Naive thymus-derived CD4-positive, alpha-beta T cell (primary cell): ENCODE measurements at regions of chr16 and their contacts with region 1.

Region 1: DNA sequence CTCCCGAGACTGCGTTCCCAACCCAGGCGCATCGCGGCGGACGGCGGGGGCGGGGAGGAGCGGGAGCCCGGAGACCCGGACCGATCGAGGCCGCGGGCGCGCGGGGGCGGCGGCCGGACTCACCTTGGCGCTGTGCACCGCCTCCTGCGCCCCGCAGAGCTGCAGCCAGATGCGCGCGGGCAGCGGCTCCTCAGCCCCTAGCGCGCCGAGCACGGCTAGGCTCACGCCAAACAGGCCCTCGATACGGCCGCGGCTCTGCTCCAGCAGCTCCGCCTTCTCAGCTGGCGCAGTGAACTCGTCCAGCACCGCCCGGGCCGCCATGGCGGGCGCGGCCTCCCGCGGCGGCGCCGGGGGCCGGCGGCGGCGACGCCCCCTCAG is 339 bp downstream of the N4BP1 start:
- DNase-seq: no peak
- ATAC-seq: peak; percentile 39
- H3K4me3 ChIP-seq: peak overlapping the region; percentile 66
- H3K4me3 Mint-ChIP-seq: peak overlapping the region in 4 of 10 donors; percentile 24 to 95 (median 56)
- H3K27ac ChIP-seq: peak overlapping the region; percentile 94
- H3K27ac Mint-ChIP-seq: peak overlapping the region in 8 of 9 donors; percentile 88 to 99 (median 94)
- H3K4me1 ChIP-seq: peaks cover 63 to 76% of the 10 kb centered on the region in 2 donors
- H3K4me1 Mint-ChIP-seq: peaks cover 24 to 50% (median 43%) of the 10 kb centered on the region in 7 donors
- H3K27me3 ChIP-seq: no peaks in the 10 kb centered on the region
- H3K27me3 Mint-ChIP-seq: no peaks in the 10 kb centered on the region

Region 2: DNA sequence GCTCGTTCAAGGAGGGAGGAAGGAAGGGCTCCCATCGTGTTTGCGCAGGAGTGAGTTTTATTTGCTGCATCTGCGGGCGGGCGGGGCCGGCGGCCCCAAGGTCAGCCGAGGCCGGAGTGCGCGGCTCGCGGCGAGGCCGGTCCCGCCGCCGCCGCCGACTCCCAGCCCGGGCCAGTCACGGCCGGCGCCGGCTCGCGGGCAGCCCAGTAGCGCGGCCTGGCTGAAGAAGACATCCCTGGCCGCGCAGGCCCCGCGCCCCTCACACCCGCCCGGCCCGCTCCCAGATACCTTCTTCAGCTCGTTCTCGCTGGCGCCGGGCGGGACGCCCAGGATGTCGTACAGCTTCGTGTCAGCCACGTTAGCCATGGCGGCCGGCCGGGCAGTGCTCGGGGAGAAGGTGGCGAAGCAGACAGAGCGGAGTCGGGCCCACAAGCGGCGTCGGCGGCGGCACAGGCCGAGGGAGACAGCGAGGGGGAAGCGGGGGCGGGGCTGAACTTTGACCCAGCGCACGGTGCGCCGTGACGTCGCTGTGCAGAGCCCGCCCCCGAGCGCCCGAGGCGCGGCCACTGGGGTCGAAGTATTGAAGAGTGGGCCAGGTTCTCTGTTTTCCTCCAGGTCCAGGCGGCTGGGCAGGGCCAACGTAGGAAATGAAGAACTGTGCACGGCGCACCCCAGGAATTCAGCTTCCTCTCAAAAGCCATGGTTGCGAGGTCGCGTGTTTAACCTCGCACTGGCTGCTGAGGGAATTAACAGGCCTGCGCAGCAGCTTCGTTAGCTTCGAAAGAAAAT is 1636.2 kb before region 1 on chr16 and contains the start of gene DNAJA2:
- CTCF ChIA-PET with region 1: no interaction called
- POLR2A ChIA-PET with region 1: interaction called, 6 read pairs
- intact Hi-C with region 1: loop called (anchors 2 kb)
- DNase-seq: peak; percentile 86 to 95 (median 92)
- ATAC-seq: peak; percentile 98
- H3K4me3 ChIP-seq: peak within 1 kb of the TSS; percentile 81
- H3K4me3 Mint-ChIP-seq: peak within 1 kb of the TSS; percentile 88 to 98 (median 95)
- H3K27ac ChIP-seq: peak within 1 kb of the TSS; percentile 93
- H3K27ac Mint-ChIP-seq: peak within 1 kb of the TSS; percentile 87 to 100 (median 99)
- H3K4me1 ChIP-seq: peaks cover 26 to 33% of the 10 kb centered on the region in 2 donors
- H3K4me1 Mint-ChIP-seq: peaks cover 27 to 70% (median 51%) of the 10 kb centered on the region in 7 donors
- H3K27me3 ChIP-seq: no peaks in the 10 kb centered on the region
- H3K27me3 Mint-ChIP-seq: no peaks in the 10 kb centered on the region
- total RNA-seq, gene DNAJA2: 59.4 to 73.3 (median 60.9) TPM

Region 3: GRCh38 chr16:48318630-48319029 is 291.0 kb before region 1 on chr16:
- CTCF ChIA-PET with region 1: interaction called, 4 read pairs
- POLR2A ChIA-PET with region 1: interaction called, 15 read pairs
- intact Hi-C with region 1: loop called in 1 of 2 experiments (anchors 2 kb)
- DNase-seq: peak in 8 of 9 donors; percentile 25 to 83 (median 76)
- ATAC-seq: peak; percentile 92
- H3K4me3 ChIP-seq: peak overlapping the region; percentile 25
- H3K4me3 Mint-ChIP-seq: peak overlapping the region; percentile 62 to 88 (median 80)
- H3K27ac ChIP-seq: peak overlapping the region; percentile 9
- H3K27ac Mint-ChIP-seq: peak overlapping the region; percentile 58 to 88 (median 82)
- H3K4me1 ChIP-seq: peaks cover 20 to 35% of the 10 kb centered on the region in 2 donors
- H3K4me1 Mint-ChIP-seq: peaks cover 17 to 77% (median 62%) of the 10 kb centered on the region in 7 donors
- H3K27me3 ChIP-seq: no peaks in the 10 kb centered on the region
- H3K27me3 Mint-ChIP-seq: no peaks in the 10 kb centered on the region

Region 4: DNA sequence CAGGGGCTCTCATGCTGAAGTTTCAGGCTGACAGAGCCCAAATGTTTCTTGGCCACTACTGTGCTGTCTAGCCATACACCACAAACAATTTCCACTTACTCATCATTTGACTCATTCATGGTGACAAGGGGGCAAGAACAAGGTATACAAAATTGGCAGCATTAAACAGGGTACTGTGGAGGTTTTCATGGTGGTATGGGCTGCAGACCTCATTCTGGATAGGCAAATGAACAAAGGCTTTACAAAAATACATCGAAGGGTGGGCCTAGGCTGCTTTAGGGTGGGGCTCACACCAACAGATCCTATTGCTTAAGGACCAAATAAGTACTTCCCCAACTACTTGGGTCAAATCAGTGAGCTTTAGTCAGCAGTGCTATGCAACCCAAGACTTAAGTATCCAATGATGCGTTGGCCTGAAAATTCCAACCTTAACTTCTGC is 52.7 kb before region 1 on chr16:
- CTCF ChIA-PET with region 1: interaction called, 3 read pairs
- POLR2A ChIA-PET with region 1: interaction called, 4 read pairs
- intact Hi-C with region 1: loop called (anchors 1 to 2 kb)
- DNase-seq: no peak
- ATAC-seq: peak; percentile 63
- H3K4me3 ChIP-seq: no peak overlapping the region
- H3K4me3 Mint-ChIP-seq: peak overlapping the region in 6 of 10 donors; percentile 12 to 78 (median 30)
- H3K27ac ChIP-seq: no peak overlapping the region
- H3K27ac Mint-ChIP-seq: peak overlapping the region in 7 of 9 donors; percentile 0 to 84 (median 63)
- H3K4me1 ChIP-seq: peaks cover 19 to 24% of the 10 kb centered on the region in 2 donors
- H3K4me1 Mint-ChIP-seq: peaks cover 45 to 92% (median 80%) of the 10 kb centered on the region in 7 donors
- H3K27me3 ChIP-seq: no peaks in the 10 kb centered on the region
- H3K27me3 Mint-ChIP-seq: no peaks in the 10 kb centered on the region

Region 5: GRCh38 chr16:48632137-48632774 is 22.6 kb after region 1 on chr16:
- CTCF ChIA-PET with region 1: interaction called, 6 read pairs
- POLR2A ChIA-PET with region 1: interaction called, 12 read pairs
- intact Hi-C with region 1: no loop called
- DNase-seq: no peak
- ATAC-seq: no peak
- H3K4me3 ChIP-seq: no peak overlapping the region
- H3K4me3 Mint-ChIP-seq: no peak overlapping the region
- H3K27ac ChIP-seq: no peak overlapping the region
- H3K27ac Mint-ChIP-seq: no peak overlapping the region
- H3K4me1 ChIP-seq: peaks cover 0 to 5% of the 10 kb centered on the region in 2 donors
- H3K4me1 Mint-ChIP-seq: peaks cover 0 to 9% (median 7%) of the 10 kb centered on the region in 7 donors
- H3K27me3 ChIP-seq: no peaks in the 10 kb centered on the region
- H3K27me3 Mint-ChIP-seq: peaks cover 0 to 2% (median 0%) of the 10 kb centered on the region in 5 donors